Activated CD4-positive, alpha-beta memory T cell treated with anti-CD3 and anti-CD28 coated beads, Interleukin-2, amount 10 ng/mL, durations not matched to agents 7 days and 5 days (primary cell): ENCODE measurements at regions of chr9 and their contacts with region 1.

Region 1: GRCh38 chr9:98974994-98975712 is 31.4 kb downstream of the COL15A1 start:
- DNase-seq: peak; percentile 82
- H3K4me3 Mint-ChIP-seq: no peak overlapping the region
- H3K27ac Mint-ChIP-seq: no peak overlapping the region
- H3K4me1 Mint-ChIP-seq: peaks cover 8% of the 10 kb centered on the region
- H3K27me3 Mint-ChIP-seq: peaks cover 26% of the 10 kb centered on the region

Region 2: DNA sequence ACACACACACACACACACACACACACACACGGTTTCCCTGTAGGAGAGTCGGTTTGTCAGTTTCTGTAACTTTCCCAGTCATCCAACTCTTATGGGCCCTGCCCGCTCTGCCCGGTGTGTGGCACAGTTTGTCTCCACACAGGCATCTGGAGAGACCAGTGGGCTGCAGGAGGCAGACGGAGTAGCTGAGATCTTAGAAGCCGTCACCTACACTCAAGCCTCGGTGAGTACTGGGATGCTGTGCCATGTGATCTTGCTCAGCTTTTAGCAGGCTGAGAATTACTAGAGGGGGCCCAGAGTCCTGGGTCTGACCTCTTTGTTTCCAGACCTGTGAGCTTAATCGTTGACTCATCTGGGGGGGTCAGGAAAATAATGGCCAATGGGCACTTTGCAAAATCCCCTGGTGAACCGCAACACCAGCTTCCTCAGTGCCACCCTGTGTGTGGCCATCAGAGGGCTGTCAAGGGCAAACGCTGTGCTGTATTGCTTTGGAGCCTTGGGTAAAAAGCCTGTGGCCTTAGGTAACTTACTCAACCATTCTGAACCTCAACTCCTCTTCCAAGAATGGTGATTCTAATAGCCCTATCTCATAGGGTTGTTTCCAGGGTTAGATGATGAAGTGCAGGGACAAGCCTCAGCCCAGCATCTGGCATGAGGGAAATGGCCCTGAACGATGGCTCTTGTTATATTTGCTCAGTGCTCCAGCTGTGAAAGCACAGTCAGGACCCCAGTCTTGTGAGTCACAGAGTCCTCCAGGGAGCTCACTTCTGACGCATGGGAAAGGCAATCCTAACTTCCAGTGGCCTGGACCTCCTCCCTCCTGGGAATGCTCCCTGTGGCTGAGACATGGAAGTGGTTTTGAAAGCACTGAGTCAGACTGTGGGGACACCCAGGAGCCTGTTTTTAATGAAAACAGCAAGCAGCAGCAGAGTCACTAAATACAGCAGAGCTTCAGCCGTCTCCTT is 14.2 kb after region 1 on chr9:
- CTCF ChIA-PET with region 1: interaction called, 11 read pairs
- POLR2A ChIA-PET with region 1: no interaction called
- DNase-seq: no peak
- H3K4me3 Mint-ChIP-seq: no peak overlapping the region
- H3K27ac Mint-ChIP-seq: no peak overlapping the region
- H3K4me1 Mint-ChIP-seq: peaks cover 9% of the 10 kb centered on the region
- H3K27me3 Mint-ChIP-seq: no peaks in the 10 kb centered on the region

Region 3: DNA sequence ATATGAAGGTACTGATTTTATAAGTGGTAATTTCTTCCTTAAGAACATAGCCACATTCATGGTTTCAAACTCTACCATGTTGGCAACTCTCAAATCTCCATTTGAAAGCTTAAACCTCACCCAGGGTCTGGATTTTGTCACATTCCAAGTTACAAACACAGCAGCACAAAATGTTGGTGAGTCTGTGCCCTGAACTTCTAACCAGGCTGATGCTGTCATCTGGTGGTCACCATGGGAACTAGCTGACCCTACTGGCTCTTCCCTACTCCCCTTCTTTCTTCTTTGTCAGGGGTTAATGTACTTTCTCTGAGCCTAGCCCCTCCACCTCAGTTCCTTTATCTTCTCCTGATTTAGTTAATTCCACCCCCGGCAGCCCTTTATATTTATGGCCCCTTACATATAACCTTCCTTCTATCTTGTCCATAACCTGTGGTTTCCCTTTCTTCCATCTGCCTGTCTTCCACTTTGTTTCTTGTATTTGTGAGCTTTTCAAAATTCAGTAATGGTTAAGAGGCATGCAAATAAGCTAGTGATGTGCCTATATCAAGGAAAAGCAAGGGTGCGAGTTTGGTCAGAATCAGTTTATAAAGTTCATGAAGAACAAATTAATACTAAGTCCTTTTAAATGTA is 165.6 kb after region 1 on chr9:
- CTCF ChIA-PET with region 1: interaction called, 19 read pairs
- POLR2A ChIA-PET with region 1: no interaction called
- DNase-seq: peak; percentile 48
- H3K4me3 Mint-ChIP-seq: no peak overlapping the region
- H3K27ac Mint-ChIP-seq: no peak overlapping the region
- H3K4me1 Mint-ChIP-seq: peaks cover 31% of the 10 kb centered on the region
- H3K27me3 Mint-ChIP-seq: no peaks in the 10 kb centered on the region

Region 4: GRCh38 chr9:99150451-99151171 is 175.5 kb after region 1 on chr9:
- CTCF ChIA-PET with region 1: interaction called, 10 read pairs
- POLR2A ChIA-PET with region 1: no interaction called
- DNase-seq: no peak
- H3K4me3 Mint-ChIP-seq: no peak overlapping the region
- H3K27ac Mint-ChIP-seq: no peak overlapping the region
- H3K4me1 Mint-ChIP-seq: peaks cover 15% of the 10 kb centered on the region
- H3K27me3 Mint-ChIP-seq: peaks cover 8% of the 10 kb centered on the region